Activated T-helper 2 cell treated with anti-CD3 and anti-CD28 coated beads, Interferon-gamma antibody, Interleukin-2, Interleukin-4, amounts not matched to agents 10 μg/mL and 5 μg/mL and 100 μg/mL, durations not matched to agents 14 hours and 24 hours and 36 hours (primary cell): ENCODE measurements at regions of chr18 and their contacts with region 1.

Region 1: DNA sequence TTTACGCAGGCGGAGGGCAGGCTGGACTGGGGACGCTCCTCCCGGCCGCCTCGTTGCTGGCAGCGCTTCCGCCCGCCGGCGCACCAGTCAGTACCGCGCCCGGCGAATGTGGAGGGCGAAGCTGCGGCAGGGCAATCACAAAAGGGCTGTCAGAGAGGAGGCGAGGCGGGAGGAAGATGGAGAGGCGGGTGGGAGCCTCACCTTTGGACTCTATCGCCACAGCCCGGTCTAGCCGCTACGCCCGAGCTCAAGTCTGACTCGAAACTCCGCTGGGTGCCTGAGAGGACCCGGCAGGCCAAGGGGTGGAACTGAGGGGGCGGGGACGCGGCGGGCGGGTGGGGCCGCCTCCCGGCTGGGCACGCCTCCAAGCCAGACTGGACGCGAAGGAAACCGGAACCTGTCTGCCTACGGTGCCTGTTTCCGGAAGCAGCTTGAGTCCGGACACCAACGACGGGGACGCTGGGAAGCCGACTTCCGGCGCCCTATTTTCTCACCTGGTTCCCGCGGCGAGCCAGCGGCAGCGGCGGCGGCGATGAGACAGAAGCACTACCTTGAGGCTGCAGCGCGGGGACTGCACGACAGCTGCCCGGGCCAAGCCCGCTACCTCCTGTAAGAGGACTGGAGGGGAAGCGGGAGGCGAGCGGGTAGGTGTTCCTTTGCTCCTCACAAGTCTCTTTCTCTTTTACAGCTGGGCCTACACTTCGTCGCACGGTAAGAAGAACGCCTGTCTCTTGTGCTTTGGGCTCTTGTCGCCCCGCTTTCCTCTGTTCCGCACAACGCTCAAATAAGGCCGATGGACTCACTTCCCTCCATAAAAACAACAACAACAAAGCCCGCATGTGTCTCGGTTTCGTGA is at the start of gene RMP24:
- DNase-seq: peak; percentile 90
- H3K4me3 Mint-ChIP-seq: peak within 1 kb of the TSS; percentile 96
- H3K27ac Mint-ChIP-seq: peak within 1 kb of the TSS; percentile 94
- H3K4me1 Mint-ChIP-seq: peaks cover 39% of the 10 kb centered on the region
- H3K27me3 Mint-ChIP-seq: no peaks in the 10 kb centered on the region

Region 2: DNA sequence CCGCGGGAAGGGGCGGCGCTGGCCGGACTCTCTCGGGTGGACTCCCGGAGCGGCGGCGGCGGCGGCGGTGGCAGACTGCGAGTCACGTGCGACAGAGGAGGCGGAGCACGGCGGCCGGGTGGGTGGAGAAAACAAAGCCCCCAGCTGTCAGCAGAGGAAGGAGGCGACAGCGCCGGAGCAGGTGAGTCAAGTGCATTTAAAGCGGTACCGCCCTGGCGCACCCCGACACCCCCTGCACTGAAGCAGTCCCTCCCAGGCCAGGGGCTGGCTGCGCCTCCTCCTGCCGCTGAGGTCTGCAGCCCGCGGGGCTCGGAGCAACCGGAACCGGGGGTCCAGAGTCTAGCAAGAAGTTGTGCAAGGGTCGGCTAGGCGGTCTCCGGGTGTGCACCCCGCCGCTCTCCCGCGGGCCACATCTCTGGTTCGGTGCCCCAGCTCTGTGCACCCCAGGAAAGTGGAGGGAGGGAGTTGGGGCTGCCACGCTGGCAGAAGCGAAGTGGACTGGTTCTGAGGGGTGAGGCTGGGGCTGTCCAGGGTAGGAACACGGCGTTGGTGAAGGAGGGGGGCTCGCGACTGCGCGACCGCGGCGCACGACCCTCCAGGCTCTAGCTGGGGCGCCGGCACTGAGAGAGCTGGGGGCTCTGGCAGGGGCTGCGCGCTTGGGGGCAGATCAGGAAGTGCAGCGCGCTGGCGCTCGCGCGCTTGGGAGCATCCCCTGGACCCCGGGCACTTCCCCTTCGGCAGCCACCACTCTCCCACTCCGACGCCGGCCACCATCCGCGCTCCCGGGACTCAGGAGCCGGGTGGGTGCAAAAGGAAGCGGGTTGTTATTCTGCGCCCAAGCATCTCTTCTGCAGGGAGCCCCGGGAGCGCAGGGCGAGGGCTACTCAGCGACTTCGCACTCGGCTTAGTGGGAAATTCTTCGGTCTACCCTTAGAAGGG is 995.3 kb before region 1 on chr18:
- intact Hi-C with region 1: loop called (anchors 5 kb)
- DNase-seq: peak; percentile 62
- H3K4me3 Mint-ChIP-seq: peak overlapping the region; percentile 81
- H3K27ac Mint-ChIP-seq: no peak overlapping the region
- H3K4me1 Mint-ChIP-seq: peaks cover 25% of the 10 kb centered on the region
- H3K27me3 Mint-ChIP-seq: peaks cover 37% of the 10 kb centered on the region

Region 3: DNA sequence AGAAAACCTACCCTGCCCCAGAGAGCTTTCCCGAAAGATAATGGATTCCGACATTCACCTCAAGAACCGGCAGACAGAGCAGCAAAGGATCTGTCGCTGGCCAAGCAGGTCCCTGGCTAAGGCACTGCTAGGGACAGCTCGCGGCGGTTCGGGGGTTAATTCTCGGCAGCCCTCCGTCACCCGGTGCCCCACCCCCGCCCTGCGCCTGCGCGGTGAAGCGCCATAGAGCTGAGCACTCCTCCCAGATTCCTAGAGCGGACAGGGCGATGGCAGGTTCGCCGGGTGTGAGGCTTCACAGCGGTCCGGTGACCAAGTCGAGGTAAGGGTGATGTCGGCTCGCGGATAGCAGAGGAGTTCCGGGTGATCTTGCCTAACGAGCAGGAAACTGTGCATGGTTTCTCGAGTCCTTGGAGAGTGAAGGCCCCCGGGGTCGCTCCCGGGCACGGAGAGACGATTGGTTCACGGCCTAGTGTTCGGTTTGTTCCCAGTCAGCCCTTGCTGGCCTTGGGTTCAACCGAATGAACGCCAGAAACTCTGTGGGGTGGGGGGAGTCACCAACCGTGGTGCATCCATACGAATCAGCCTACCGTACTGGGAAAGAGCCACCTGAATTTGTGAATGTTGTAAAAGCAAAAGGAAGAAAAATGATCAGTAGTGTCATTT is 682.2 kb before region 1 on chr18 and contains the start of gene ZSCAN30:
- intact Hi-C with region 1: loop called (anchors 1 kb)
- DNase-seq: peak; percentile 93
- H3K4me3 Mint-ChIP-seq: peak within 1 kb of the TSS; percentile 98
- H3K27ac Mint-ChIP-seq: peak within 1 kb of the TSS; percentile 94
- H3K4me1 Mint-ChIP-seq: peaks cover 29% of the 10 kb centered on the region
- H3K27me3 Mint-ChIP-seq: no peaks in the 10 kb centered on the region
- total RNA-seq, gene ZSCAN30: 15.5 and 19.9 TPM in 2 replicates

Region 4: DNA sequence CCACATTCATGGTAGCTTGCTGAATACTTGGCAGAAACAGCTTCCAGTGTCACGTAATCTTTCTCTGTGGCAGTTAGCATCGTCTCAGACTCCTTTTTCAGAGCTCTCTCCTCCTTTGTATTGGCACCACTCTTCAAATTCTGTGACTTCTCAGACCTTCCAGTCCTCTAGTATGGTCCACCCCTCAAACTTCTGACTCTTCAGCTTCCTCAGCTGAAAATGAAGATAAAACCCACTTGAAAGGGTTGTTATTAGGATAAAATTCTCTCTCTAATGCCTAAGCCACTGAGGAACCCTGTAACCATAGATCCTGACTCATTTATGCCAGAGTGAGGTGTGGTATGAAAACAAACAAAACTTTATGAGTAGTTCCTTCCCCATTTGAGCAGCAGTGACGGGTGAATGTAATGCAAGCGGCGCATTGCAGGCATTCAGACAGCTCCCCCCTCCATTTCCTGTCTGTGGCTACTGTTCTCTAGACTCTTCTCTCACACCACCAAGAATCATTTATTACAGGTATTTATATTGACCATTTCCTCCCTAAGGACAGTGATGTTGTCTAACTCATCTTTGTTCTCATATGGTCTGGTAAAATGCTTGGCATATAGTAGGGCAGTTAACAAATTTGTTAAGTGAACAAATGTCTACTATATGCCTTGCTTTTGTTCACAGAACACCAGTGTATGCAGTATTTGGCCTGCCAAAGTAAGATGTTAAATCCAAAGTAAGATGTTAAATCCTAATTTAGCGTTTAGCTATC is 355.6 kb before region 1 on chr18:
- intact Hi-C with region 1: loop called (anchors 2 kb)
- DNase-seq: peak; percentile 57
- H3K4me3 Mint-ChIP-seq: no peak overlapping the region
- H3K27ac Mint-ChIP-seq: no peak overlapping the region
- H3K4me1 Mint-ChIP-seq: peaks cover 15% of the 10 kb centered on the region
- H3K27me3 Mint-ChIP-seq: no peaks in the 10 kb centered on the region

Region 5: DNA sequence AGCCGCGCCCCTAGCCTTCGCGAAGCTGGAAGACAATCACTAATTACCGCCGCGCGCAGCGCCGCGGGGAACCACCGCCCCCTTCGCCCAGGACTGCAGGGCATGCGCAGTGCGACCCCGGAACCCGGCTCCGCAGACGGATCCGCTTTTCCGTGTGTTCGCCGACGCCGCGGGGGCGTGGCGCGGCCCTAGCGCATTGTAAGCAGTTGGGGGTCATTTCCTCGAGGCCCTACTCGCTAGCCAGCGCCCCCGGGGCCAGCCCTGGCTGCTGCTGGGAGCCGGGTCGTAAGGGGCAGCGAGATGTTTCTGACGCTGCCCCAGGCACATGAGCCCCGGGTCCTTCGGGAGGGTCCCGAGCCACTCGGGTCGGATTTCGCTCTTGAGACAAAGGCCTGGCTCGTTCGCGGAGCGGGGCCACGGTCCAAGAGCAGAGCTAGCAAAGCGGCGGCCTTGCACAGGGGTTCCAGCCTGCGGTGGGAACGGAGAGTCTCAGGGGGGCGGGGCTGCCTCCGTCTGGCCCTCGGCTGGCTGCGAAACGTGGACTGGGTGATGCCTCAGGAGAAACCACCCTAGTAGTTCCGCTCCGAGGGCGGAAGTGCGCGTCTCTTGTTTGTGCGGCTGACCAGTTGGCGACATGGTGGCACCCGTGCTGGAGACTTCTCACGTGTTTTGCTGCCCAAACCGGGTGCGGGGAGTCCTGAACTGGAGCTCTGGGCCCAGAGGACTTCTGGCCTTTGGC is 157.0 kb after region 1 on chr18 and contains the starts of genes ELP2 and SLC39A6:
- intact Hi-C with region 1: loop called (anchors 1 kb)
- DNase-seq: peak; percentile 92
- H3K4me3 Mint-ChIP-seq: peak within 1 kb of the TSS; percentile 95
- H3K27ac Mint-ChIP-seq: peak within 1 kb of the TSS; percentile 93
- H3K4me1 Mint-ChIP-seq: peaks cover 47% of the 10 kb centered on the region
- H3K27me3 Mint-ChIP-seq: no peaks in the 10 kb centered on the region
- total RNA-seq, gene ELP2: 93.3 and 94.2 TPM in 2 replicates
- total RNA-seq, gene SLC39A6: 41.7 and 42.7 TPM in 2 replicates